ENCODE measurements at regions of chr11 and their contacts with region 1.

Region 1: DNA sequence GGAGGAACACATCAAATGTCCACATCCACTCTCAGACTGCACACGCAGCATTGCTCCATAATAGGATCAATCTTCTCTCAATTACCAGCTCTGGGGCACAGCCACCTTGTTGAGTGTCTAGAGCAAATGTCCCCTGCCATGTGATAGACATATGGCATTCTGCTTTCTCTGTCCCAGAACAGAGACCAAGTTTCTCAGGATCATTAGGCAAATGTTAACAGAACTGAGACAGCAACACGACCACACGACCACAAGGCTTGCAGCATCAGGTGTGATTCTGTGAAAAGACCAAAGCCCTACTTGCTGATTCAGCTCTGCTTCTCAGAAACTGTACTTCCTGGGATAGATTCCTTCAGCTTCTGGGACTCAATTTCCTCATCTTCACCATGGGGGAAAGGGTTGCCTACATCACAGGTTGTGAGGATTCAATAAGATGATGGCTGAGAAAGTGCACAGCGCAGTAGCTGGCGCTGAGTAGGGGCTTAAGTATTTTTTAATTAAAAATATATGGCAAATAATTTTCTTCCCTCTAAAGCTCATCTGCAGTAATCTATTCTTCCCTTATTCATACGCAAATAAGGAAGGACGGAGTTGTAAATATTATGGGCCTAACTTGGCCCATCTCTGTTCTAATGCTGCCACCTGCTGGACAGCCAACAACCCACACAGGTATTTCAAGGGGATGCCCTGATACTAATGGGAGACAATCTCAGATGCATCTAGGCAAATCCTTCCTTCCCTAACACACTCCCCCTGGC is 54.3 kb upstream of the USP47 start:
- DNase-seq: peak; percentile 65 to 84
- ATAC-seq: peak; percentile 88 to 96 (median 89)
- H3K4me3 ChIP-seq: no peak overlapping the region
- H3K27ac ChIP-seq: no peak overlapping the region
- H3K4me1 ChIP-seq: peaks cover 5% of the 10 kb centered on the region
- H3K27me3 ChIP-seq: no peaks in the 10 kb centered on the region
- CTCF ChIP-seq: peak; percentile 94

Region 2: GRCh38 chr11:10792398-10792975 is 995.0 kb before region 1 on chr11:
- intact Hi-C with region 1: loop called in 1 of 2 experiments (anchors 10 kb)
- DNase-seq: peak; percentile 91 to 95
- ATAC-seq: peak; percentile 90 to 94 (median 94)
- H3K4me3 ChIP-seq: peak overlapping the region; percentile 44
- H3K27ac ChIP-seq: no peak overlapping the region
- H3K4me1 ChIP-seq: peaks cover 5% of the 10 kb centered on the region
- H3K27me3 ChIP-seq: no peaks in the 10 kb centered on the region
- CTCF ChIP-seq: peak; percentile 86

Region 3: DNA sequence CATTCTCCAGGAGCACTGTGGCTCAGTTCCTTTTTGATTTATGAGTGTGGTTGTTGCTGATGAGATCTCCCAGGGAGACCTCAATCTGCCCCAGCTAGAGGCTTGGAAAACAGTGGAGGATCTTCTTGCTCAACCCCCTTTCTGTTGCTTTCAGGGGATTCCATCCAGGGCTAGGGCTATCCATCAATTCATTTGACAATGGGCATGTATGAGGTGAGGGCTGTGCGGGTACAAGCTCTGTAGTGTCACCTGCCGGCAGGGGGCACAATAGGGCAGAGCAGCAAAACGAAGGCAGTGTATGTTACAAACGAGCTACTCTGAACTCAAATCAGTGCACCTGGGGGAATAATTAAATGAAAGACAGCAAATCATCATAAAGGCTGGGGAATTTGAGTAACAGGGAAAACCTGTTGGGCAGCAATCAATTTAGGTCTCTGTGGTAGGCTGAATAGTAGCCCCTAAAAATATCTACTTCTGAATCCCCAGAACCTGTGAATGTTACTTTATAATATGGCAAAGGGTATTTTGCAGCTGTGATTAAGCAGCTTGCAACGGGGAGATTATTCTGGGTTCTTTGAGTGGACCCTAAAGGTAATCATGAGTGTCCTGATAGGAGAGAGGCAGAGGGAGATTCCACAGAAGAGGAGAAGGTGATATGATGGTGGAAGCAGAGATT is 759.3 kb before region 1 on chr11:
- intact Hi-C with region 1: loop called (anchors 2 to 5 kb)
- DNase-seq: peak; percentile 67 to 83
- ATAC-seq: peak; percentile 75 to 95 (median 86)
- H3K4me3 ChIP-seq: no peak overlapping the region
- H3K27ac ChIP-seq: no peak overlapping the region
- H3K4me1 ChIP-seq: no peaks in the 10 kb centered on the region
- H3K27me3 ChIP-seq: no peaks in the 10 kb centered on the region
- CTCF ChIP-seq: peak; percentile 82

Region 4: GRCh38 chr11:11400635-11401232 is 386.8 kb before region 1 on chr11:
- intact Hi-C with region 1: loop called in 1 of 2 experiments (anchors 10 kb)
- DNase-seq: no peak
- ATAC-seq: peak in 2 of 4 donors; percentile 39 to 51
- H3K4me3 ChIP-seq: no peak overlapping the region
- H3K27ac ChIP-seq: no peak overlapping the region
- H3K4me1 ChIP-seq: peaks cover 3% of the 10 kb centered on the region
- H3K27me3 ChIP-seq: no peaks in the 10 kb centered on the region
- CTCF ChIP-seq: peak; percentile 17

Region 5: DNA sequence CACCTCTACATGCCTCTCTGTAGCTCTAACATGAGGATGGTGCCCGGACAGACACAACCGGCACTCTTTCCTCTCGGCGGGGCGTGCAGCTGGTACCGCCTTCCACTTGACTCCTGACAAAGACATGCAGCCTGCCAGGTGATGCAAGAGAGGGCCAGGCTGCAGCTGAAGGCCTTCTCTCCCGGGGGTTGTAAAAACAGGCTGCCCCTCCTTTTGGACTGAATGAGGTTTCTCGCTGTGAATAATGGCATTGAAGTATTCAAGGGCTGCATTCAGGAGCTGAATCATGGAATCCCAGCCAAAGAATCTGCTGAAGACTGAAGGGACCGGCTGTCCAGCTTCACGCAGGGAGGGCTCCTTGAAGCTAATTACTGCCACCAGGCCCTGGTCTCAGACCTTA is 276.5 kb before region 1 on chr11:
- intact Hi-C with region 1: loop called in 1 of 2 experiments (anchors 10 kb)
- DNase-seq: peak; percentile 46 to 75
- ATAC-seq: peak; percentile 40 to 75 (median 54)
- H3K4me3 ChIP-seq: no peak overlapping the region
- H3K27ac ChIP-seq: peak overlapping the region; percentile 43
- H3K4me1 ChIP-seq: peaks cover 21% of the 10 kb centered on the region
- H3K27me3 ChIP-seq: no peaks in the 10 kb centered on the region
- CTCF ChIP-seq: no peak

Region 6: DNA sequence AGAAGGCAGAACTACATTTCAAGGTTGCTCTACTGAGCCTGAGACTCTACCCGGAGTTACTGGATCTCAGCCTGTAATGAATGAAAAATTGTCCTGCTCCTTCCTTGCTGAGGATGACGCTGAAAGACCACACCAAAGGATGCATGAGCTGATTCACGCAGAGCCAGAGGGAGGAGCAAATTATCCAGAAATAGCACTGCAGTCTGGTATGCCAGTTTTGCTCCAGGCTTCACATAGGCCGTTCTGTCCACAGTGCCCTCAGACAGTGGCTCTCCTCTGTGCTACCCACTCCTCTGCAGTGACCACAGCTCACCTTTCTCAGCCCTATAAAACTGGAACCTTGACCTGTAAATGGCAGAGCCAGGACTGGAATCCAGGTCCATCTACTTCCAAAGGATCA is 86.4 kb before region 1 on chr11:
- intact Hi-C with region 1: loop called in 1 of 2 experiments (anchors 5 kb)
- DNase-seq: no peak
- ATAC-seq: peak; percentile 82 to 95 (median 90)
- H3K4me3 ChIP-seq: no peak overlapping the region
- H3K27ac ChIP-seq: no peak overlapping the region
- H3K4me1 ChIP-seq: peaks cover 8% of the 10 kb centered on the region
- H3K27me3 ChIP-seq: no peaks in the 10 kb centered on the region
- CTCF ChIP-seq: peak; percentile 17

Region 7: DNA sequence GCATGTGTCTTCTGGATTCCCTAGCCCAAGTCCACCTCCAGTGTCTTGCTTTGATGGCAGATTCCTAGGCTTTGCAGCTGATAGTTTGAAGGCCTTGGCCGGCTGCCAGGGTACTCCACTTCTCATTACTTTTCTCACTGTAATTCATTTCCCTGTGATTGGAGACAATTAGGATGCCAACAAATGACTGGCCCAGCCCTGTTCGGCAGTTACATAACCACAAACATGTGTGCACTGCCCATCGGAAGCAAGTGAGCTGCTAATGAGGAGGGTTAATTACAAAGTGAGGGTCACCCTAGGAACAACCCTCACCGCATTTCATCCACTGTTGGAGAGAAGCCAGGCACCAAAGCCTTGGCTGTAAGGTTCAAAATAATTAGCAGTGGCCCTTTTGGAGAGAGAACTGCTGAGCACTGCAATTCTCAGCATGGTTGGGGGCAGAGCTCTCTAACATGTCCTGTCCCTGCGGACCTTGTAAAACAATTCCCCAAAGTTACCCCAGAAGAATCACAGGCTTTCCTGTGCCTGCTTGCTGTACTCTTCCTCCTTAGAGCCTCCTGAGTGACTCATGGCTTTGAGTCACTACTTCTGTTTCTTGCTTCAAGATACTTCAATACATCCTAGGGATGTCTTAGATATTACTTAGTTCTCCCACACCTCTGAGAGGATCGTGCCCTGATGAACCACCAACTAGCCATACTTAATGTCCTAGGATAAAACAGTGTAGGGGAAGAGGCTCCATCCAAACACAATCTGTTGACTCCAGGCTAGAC is 56.0 kb before region 1 on chr11:
- intact Hi-C with region 1: no loop called
- DNase-seq: no peak
- ATAC-seq: no peak
- H3K4me3 ChIP-seq: no peak overlapping the region
- H3K27ac ChIP-seq: no peak overlapping the region
- H3K4me1 ChIP-seq: no peaks in the 10 kb centered on the region
- H3K27me3 ChIP-seq: no peaks in the 10 kb centered on the region
- CTCF ChIP-seq: no peak

Region 8: DNA sequence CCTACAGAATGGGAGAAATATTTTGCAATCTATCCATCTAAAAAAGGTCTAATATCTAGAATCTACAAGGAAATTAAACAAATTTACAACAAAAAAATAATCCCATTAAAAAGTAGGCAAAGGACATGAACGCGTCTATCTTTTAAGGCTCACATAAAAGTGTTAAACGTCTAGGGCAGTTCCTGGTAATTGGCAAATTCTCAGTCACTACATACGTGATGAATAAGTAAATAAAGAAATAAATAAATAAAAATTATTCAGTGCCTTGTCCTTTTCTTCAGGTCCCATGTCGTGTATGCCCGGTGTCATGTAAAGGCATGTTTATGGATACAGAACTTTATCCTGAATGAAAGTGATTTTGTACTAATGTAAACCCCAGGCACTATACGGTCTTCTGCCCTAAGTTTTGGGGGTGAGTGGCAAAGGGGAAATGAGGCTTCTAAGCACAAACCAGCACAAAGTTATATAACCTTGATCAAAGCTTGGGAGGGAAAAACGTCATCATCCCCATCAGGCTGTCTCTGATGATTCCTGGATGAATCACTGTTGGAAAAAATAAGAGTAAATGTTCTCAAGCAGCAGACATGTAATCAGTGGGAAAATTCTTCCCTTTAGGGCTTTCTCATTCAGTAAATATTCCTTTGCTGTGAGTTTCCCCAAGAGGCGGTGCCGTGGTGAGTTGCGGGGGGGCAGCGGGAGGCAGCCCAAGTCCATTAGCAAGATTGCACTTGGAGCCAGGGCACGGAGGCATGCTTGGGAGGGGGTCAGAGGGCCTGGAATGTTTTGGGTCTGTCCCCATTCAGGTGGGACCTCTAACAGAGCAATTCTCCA is 292.5 kb after region 1 on chr11:
- intact Hi-C with region 1: no loop called
- DNase-seq: peak; percentile 60 to 67
- ATAC-seq: no peak
- H3K4me3 ChIP-seq: no peak overlapping the region
- H3K27ac ChIP-seq: no peak overlapping the region
- H3K4me1 ChIP-seq: peaks cover 23% of the 10 kb centered on the region
- H3K27me3 ChIP-seq: no peaks in the 10 kb centered on the region
- CTCF ChIP-seq: no peak